Activated CD4-positive, alpha-beta T cell treated with anti-CD3 and anti-CD28 coated beads for 36 hours (primary cell): ENCODE measurements at regions of chr2 and their contacts with region 1.

Region 1: DNA sequence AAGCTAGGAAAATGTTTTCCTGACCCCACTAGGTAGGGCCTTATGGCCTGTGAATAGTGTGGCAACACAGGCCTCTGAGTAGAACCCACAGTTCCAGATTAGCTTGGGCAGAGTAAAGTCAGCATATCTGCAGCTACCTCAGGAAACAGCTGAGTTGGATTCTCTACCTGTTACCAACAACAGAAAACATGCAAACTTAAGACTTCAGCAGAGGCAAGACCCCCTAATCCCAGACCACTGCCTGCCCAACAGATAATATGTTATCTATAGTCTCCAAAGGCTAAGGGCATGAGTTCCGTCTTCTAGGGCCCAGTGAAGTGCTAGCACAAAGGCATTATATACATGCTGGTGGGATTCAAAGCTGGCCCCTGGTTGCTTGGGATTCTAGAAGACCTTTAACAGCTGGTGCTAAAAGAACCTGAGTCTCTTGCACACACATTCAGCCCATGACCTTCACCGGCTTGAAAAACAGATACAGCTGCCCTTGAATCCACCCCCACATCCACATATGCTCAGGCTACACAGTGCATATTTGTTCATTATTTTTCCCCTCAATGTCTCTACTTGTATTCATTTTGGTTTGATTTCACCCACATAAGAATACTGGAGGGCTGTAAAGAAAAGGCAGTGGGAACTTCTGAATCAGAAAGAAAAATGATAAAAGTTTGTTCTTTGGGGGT is 13.5 kb upstream of the UBXN4 start:
- DNase-seq: no peak
- ATAC-seq: no peak
- H3K4me3 Mint-ChIP-seq: no peak overlapping the region
- H3K27ac Mint-ChIP-seq: no peak overlapping the region
- H3K4me1 Mint-ChIP-seq: no peaks in the 10 kb centered on the region
- H3K27me3 Mint-ChIP-seq: no peaks in the 10 kb centered on the region

Region 2: GRCh38 chr2:135890835-135891234 is 162.6 kb after region 1 on chr2:
- CTCF ChIA-PET with region 1: no interaction called
- POLR2A ChIA-PET with region 1: interaction called, 10 read pairs
- intact Hi-C with region 1: no loop called
- DNase-seq: no peak
- ATAC-seq: no peak
- H3K4me3 Mint-ChIP-seq: no peak overlapping the region
- H3K27ac Mint-ChIP-seq: no peak overlapping the region
- H3K4me1 Mint-ChIP-seq: no peaks in the 10 kb centered on the region
- H3K27me3 Mint-ChIP-seq: no peaks in the 10 kb centered on the region